Activated CD4-positive, alpha-beta T cell treated with anti-CD3 and anti-CD28 coated beads for 36 hours (primary cell): ENCODE measurements at regions of chr6 and their contacts with region 1.

Region 1: DNA sequence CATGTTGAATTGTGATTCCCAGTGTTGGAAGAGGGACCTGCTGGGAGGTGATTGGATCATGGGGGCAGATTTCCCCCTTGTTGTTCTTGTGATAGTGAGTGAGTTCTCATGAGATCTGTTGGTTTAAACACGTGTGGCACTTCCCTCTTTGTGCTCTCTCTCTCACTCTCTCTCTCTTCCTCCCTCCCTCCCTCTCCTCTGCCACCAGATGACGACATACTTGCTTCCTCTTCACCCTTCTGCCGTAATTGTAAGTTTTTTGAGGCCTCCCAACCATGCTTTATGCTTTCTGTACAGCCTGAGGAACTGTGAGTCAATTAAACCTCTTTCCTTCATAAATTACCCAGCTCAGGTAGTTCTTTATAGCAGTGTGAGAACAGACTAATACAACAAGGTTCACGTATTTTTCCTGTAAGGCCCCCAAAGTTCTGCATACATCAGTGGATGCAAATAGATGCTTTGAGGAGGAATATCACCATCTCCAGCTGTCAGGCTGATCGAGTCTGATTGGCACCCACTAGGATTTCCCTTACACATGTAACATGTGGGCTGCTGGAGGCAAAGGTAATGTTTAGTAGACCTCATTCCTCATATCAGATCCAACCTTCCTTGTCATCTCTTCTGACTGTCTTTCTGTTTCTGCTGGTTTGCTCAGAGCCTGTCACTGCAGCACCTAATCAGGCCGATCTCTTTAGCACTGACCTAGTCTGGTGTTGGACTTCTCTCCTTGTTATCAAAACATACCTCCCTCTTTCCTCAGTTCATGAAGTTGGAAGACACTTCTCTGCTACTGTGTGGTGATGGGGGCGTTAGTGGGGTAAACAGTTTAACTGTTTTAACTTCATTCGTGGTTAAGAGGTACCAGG is 54.3 kb upstream of the BACH2 start:
- DNase-seq: peak; percentile 60
- ATAC-seq: peak; percentile 65
- H3K4me3 Mint-ChIP-seq: peak overlapping the region; percentile 44
- H3K27ac Mint-ChIP-seq: peak overlapping the region; percentile 91
- H3K4me1 Mint-ChIP-seq: peaks cover 54% of the 10 kb centered on the region
- H3K27me3 Mint-ChIP-seq: no peaks in the 10 kb centered on the region

Region 2: GRCh38 chr6:90168693-90169131 is 182.2 kb before region 1 on chr6:
- CTCF ChIA-PET with region 1: no interaction called
- POLR2A ChIA-PET with region 1: no interaction called
- intact Hi-C with region 1: no loop called
- DNase-seq: no peak
- ATAC-seq: peak; percentile 51
- H3K4me3 Mint-ChIP-seq: no peak overlapping the region
- H3K27ac Mint-ChIP-seq: peak overlapping the region; percentile 68
- H3K4me1 Mint-ChIP-seq: peaks cover 61% of the 10 kb centered on the region
- H3K27me3 Mint-ChIP-seq: no peaks in the 10 kb centered on the region

Region 3: GRCh38 chr6:90296346-90297114 is 54.4 kb before region 1 on chr6 and contains the start of gene BACH2:
- CTCF ChIA-PET with region 1: interaction called, 3 read pairs
- POLR2A ChIA-PET with region 1: interaction called, 3 read pairs
- intact Hi-C with region 1: loop called (anchors 1 kb)
- DNase-seq: peak; percentile 99
- ATAC-seq: peak; percentile 66
- H3K4me3 Mint-ChIP-seq: peak within 1 kb of the TSS; percentile 86
- H3K27ac Mint-ChIP-seq: peak within 1 kb of the TSS; percentile 100
- H3K4me1 Mint-ChIP-seq: peaks cover 49% of the 10 kb centered on the region
- H3K27me3 Mint-ChIP-seq: peaks cover 7% of the 10 kb centered on the region
- total RNA-seq, gene BACH2: 74.7 to 87.3 TPM

Region 4: DNA sequence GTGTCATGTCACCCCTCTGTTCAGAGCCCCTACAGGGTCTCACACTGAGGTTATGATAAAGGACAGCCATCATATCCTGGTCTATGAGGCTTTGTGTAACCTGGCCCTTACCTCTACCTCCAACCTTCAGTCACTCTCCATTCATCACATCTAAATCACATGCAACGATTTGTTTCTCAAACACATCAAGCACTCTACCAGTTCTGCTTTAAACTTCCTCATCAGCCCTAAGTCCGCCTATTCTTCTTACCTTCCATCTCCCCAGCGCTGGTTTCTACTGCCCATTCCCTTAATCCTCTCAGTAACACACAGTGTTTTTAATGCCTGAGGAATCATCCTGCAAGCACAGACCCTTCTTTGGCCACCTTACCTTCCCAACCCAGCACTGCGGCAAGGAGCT is 36.4 kb before region 1 on chr6:
- CTCF ChIA-PET with region 1: no interaction called
- POLR2A ChIA-PET with region 1: no interaction called
- intact Hi-C with region 1: no loop called
- DNase-seq: no peak
- ATAC-seq: no peak
- H3K4me3 Mint-ChIP-seq: no peak overlapping the region
- H3K27ac Mint-ChIP-seq: no peak overlapping the region
- H3K4me1 Mint-ChIP-seq: peaks cover 9% of the 10 kb centered on the region
- H3K27me3 Mint-ChIP-seq: peaks cover 11% of the 10 kb centered on the region

Region 5: DNA sequence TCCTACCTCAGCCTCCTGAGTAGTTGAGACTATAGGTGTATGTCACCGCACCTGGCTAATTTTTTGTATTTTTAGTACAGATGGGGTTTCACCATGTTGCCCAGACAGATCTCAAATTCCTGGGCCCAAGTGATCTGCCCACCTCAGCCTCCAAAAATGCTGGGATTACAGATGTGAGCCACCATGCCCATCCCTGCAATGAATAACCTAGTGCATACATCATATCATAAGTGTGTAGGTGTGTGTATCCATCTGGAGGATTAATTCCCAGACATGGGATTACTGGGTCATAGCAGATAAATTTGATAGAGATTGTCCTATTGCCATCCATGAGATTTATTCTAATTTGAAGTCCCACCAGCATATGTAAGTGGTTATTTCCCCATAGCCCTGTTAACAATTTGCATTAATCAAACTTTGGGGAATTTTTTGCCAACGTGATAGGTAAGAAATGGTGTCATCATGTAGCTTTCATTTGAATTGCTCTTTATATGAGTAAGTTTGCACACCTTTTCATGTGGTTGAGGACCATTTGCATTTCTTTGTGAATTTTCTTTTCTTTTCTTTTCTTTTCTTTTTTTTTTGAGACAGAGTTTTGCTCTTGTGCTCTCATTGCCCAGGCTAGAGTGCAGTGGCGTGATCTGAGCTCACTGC is 24.4 kb before region 1 on chr6:
- CTCF ChIA-PET with region 1: no interaction called
- POLR2A ChIA-PET with region 1: interaction called, 3 read pairs
- intact Hi-C with region 1: loop called (anchors 1 to 2 kb)
- DNase-seq: peak; percentile 43
- ATAC-seq: peak; percentile 85
- H3K4me3 Mint-ChIP-seq: no peak overlapping the region
- H3K27ac Mint-ChIP-seq: peak overlapping the region; percentile 58
- H3K4me1 Mint-ChIP-seq: peaks cover 48% of the 10 kb centered on the region
- H3K27me3 Mint-ChIP-seq: no peaks in the 10 kb centered on the region

Region 6: DNA sequence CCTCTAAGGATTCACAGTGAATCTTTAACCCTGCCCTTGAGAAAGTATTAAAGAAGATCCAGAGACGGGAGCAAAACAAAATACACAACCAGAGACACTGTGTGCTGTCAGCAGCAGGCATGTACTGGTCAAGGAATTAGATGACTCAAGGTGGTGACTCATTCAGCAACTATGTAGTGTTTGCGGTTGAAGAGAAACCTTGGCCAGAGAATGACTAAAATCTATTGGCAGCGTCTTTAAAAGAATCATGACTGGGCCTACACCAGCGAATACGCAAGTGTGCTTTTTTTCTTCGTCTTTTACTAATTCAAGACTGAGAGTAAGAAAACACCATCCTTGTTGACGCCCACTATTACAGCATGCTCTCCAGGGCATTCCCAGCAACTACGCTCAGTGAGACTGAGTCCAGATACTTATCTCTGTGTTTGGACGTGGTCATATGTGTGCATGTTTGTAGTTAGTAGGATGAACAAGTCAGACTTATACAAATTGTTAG is 18.1 kb after region 1 on chr6:
- CTCF ChIA-PET with region 1: interaction called, 3 read pairs
- POLR2A ChIA-PET with region 1: no interaction called
- intact Hi-C with region 1: loop called in 1 of 2 experiments (anchors 1 kb)
- DNase-seq: peak; percentile 33
- ATAC-seq: peak; percentile 75
- H3K4me3 Mint-ChIP-seq: no peak overlapping the region
- H3K27ac Mint-ChIP-seq: peak overlapping the region; percentile 24
- H3K4me1 Mint-ChIP-seq: peaks cover 22% of the 10 kb centered on the region
- H3K27me3 Mint-ChIP-seq: no peaks in the 10 kb centered on the region

Region 7: DNA sequence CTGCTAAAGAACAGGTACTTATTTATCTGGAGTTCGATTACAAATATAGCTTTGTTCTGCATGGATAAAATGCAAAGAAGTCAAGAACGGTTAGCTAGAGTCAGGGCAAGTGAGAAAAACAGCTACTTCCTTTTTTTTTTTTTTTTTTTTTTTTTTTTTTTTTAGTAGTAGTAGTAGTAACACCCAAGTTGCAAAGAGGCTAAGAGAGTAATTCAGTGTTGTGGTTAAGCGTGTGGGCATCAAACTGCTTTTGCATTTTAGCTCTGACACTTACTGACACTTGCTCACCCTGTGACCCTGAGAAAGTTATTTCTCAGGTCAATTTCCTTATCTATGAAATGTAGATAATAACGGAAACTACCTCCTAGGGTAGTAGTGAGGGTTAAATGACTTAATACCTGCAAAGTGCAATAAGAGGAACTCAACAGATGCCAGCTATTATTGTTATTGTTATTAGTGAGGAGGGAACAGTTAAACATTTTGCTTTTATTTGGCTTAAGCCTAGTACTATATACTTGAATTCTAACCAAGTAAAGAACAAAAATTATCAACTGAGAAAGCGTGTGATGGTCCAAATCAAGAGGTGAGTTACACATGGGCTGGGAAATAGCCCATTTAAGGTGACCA is 32.4 kb after region 1 on chr6:
- CTCF ChIA-PET with region 1: interaction called, 6 read pairs
- POLR2A ChIA-PET with region 1: no interaction called
- intact Hi-C with region 1: loop called (anchors 2 to 5 kb)
- DNase-seq: peak; percentile 41
- ATAC-seq: peak; percentile 92
- H3K4me3 Mint-ChIP-seq: no peak overlapping the region
- H3K27ac Mint-ChIP-seq: no peak overlapping the region
- H3K4me1 Mint-ChIP-seq: peaks cover 47% of the 10 kb centered on the region
- H3K27me3 Mint-ChIP-seq: peaks cover 6% of the 10 kb centered on the region

Region 8: GRCh38 chr6:90425161-90425641 is 74.3 kb after region 1 on chr6:
- CTCF ChIA-PET with region 1: no interaction called
- POLR2A ChIA-PET with region 1: no interaction called
- intact Hi-C with region 1: loop called in 1 of 2 experiments (anchors 2 kb)
- DNase-seq: peak; percentile 34
- ATAC-seq: peak; percentile 93
- H3K4me3 Mint-ChIP-seq: peak overlapping the region; percentile 49
- H3K27ac Mint-ChIP-seq: peak overlapping the region; percentile 94
- H3K4me1 Mint-ChIP-seq: peaks cover 34% of the 10 kb centered on the region
- H3K27me3 Mint-ChIP-seq: no peaks in the 10 kb centered on the region